ENCODE measurements at regions of chr2 and their contacts with region 1.

Region 1: GRCh38 chr2:62958206-62958605 is 92.4 kb upstream of the OTX1 start:
- DNase-seq: no peak
- ATAC-seq: no peak
- H3K4me3 ChIP-seq: no peak overlapping the region
- H3K27ac ChIP-seq: no peak overlapping the region
- H3K4me1 ChIP-seq: no peaks in the 10 kb centered on the region
- H3K27me3 ChIP-seq: no peaks in the 10 kb centered on the region
- CTCF ChIP-seq: no peak

Region 2: DNA sequence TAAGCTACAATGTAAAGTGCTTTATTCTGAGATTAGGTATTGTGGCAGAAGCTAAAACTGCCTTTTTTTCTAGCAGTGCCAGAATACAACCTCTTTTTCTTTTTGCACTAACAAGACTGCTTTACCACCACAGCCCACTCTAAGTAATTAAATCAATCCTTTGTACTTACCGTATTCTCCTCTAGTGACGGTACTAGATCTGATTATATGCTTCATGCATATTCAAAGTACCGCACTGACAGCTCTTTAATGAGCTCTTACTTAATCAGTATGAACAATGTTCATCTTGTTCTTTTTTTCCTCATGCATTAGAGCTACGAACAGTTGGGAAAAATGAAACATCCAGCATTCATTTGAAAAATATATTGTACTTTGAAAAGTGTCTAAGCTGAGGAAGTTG is 76.3 kb after region 1 on chr2:
- CTCF ChIA-PET with region 1: no interaction called
- POLR2A ChIA-PET with region 1: no interaction called
- in situ Hi-C with region 1: no loop called
- intact Hi-C with region 1: no loop called
- DNase-seq: no peak
- ATAC-seq: no peak
- H3K4me3 ChIP-seq: no peak overlapping the region
- H3K27ac ChIP-seq: no peak overlapping the region
- H3K4me1 ChIP-seq: no peaks in the 10 kb centered on the region
- H3K27me3 ChIP-seq: no peaks in the 10 kb centered on the region
- CTCF ChIP-seq: no peak

Region 3: DNA sequence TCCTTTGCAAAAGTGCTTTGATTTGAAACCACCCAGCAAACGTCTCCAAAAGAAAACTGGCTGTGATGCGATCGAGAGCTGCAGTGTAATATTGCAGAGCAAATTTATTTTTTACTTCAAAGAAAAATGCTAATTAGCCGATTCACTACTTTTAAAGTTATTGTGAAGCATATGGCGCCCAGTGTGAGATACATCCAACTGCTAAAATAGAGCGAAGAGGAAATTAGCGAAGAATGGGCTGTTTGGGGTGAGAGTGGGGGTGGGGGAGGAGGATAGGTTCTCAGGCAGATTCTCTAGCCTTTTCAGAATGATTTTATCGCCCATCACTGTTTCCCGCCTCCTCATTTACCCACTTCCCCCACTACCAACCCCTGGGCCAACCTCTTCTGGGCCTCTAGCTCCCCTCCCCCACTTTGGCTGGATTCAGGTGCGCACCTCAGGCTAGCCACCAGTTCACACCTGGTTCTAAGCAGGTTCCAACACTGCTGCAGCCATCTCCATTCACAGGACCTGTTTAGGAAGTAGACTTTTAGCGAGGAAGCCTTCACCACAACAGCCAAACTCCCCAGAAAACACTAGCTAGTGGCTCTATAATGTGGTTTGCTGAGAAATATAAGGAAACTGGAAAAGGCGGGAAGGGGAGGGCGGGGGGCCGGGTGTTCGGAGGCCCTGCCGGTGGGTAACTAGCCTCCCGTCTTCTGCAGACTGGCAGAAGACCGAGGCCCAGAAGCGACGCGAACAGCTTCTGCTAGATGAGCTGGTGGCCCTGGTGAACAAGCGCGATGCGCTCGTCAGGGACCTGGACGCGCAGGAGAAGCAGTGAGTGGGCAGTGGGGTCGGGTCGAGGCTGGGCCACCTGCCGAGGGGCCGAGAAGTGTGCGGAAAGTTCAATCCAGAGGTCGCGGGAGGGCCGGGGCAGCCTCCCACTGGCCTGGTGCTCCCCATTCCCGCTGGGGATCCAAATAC is 86.4 kb after region 1 on chr2:
- CTCF ChIA-PET with region 1: no interaction called
- POLR2A ChIA-PET with region 1: interaction called, 14 read pairs
- in situ Hi-C with region 1: no loop called
- intact Hi-C with region 1: no loop called
- DNase-seq: no peak
- ATAC-seq: no peak
- H3K4me3 ChIP-seq: no peak overlapping the region
- H3K27ac ChIP-seq: no peak overlapping the region
- H3K4me1 ChIP-seq: peaks cover 6% of the 10 kb centered on the region
- H3K27me3 ChIP-seq: no peaks in the 10 kb centered on the region; the same call in 1 of the 2 replicates
- CTCF ChIP-seq: no peak